GM12878 (cell line): ENCODE measurements at regions of chr4 and their contacts with region 1.

Region 1: DNA sequence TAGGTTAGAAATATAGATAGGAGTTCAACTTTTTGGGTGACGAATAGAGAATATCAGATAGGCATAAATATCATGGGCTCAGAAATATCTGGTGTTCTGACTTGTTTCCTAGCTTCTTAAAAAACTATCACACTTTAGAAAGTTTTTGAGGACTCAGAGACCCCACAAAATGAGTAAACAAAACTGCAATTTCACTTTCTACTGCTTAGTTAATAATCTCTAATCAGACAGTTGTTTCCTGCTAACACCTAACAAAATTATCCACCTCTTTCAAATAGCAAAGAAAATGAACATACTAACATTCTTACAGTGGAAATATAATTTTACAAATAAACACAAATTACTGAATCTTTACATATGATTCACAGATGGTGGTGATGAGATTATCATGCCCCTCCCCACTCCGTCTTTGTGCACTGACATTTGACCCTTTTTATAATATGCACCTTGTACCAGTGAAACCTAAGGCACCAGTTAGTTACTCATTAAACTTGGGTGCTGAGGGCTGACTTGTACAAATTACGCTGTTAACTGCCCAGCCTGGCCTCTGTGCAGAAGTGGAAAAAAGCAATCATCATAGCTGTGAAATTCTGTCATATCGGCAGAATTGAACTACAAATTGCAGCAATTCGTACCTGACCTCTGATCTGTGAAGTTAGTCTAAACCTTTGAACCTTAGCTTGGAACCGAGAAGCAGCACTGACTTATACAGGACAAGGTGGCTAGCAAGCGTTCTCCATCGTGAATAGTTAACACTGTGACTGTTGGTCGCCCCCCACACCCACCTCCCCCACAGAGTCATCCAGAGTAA is 138.7 kb downstream of the CHRNA9 start:
- DNase-seq: peak; percentile 46
- ATAC-seq: peak; percentile 94
- H3K4me3 ChIP-seq: no peak overlapping the region
- H3K27ac ChIP-seq: no peak overlapping the region
- H3K4me1 ChIP-seq: peaks cover 12% of the 10 kb centered on the region
- H3K27me3 ChIP-seq: no peaks in the 10 kb centered on the region
- CTCF ChIP-seq: no peak
- EP300 ChIP-seq: 0 out of 4 replicates have a peak, but pooled peaks of 1 of the 2 experiments have one; percentile 52
- POLR2A ChIP-seq: no peak
- RAD21 ChIP-seq: no peak

Region 2: DNA sequence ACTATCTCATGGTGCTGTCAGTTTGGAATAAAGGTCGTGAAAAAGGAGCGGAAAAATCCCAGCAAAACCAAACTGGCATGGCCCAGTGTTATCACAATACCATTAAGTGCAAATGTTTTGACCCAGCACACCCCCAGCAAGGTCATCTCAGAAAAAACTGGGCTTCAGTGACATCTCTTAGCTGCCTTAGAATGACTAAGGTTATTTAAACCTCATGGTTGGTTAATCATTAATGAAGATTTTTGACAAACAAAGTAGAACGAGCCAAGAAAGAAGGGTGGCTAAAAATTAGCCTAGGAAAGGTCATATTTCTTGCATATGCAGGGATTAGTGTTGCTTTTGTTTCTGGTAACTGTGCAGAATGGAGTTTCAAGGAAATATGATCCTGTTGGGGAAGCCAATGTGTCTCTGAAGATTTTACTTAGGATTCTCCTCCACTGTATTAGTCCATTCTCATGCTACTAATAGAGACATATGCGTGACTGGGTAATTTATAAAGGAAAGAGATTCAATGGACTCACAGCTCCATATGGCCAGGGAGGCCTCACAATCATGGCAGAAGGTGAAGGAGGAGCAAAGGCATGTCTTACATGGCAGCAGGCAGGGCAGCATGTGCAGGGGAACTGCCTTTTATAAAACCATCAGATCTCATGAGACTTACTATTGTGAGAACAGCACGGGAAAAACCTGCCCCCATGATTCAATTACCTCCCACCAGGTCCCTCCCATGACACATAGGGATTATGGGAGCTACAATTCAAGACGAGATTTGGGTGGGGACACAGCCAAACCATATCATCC is 55.2 kb before region 1 on chr4:
- CTCF ChIA-PET with region 1: no interaction called
- POLR2A ChIA-PET with region 1: interaction called, 12 read pairs
- RAD21 ChIA-PET with region 1: no interaction called
- SMC1A ChIA-PET with region 1: no interaction called
- in situ Hi-C with region 1: no loop called
- intact Hi-C with region 1: no loop called
- DNase-seq: no peak
- ATAC-seq: peak; percentile 55
- H3K4me3 ChIP-seq: no peak overlapping the region
- H3K27ac ChIP-seq: no peak overlapping the region
- H3K4me1 ChIP-seq: peaks cover 11% of the 10 kb centered on the region; the same call in 1 of the 2 replicates
- H3K27me3 ChIP-seq: no peaks in the 10 kb centered on the region
- CTCF ChIP-seq: no peak
- EP300 ChIP-seq: no peak
- POLR2A ChIP-seq: no peak
- RAD21 ChIP-seq: no peak

Region 3: DNA sequence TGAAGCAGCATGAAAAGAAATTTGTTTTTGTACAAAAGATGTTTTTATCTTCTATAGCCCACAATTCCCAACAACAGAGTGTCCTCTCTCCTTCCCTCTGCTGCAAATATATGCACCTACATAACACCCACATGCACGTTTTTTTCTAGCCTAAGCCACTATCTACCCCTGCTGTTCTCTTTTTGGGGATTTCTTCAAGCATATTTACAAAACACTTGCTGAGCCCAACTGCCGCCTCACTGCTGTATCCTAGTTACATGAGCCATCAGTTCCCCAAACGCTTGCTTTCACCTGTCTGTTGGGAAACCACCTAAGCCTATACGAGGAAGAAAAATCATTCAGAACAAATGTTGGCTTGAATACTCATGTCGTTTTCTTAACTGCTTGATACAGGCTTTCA is 11.5 kb before region 1 on chr4:
- CTCF ChIA-PET with region 1: interaction called, 16 read pairs
- POLR2A ChIA-PET with region 1: interaction called, 29 read pairs
- RAD21 ChIA-PET with region 1: interaction called, 13 read pairs
- SMC1A ChIA-PET with region 1: interaction called, 102 read pairs
- in situ Hi-C with region 1: no loop called
- intact Hi-C with region 1: no loop called
- DNase-seq: peak; percentile 57
- ATAC-seq: peak; percentile 93
- H3K4me3 ChIP-seq: no peak overlapping the region
- H3K27ac ChIP-seq: peak overlapping the region; percentile 61
- H3K4me1 ChIP-seq: peaks cover 27% of the 10 kb centered on the region
- H3K27me3 ChIP-seq: no peaks in the 10 kb centered on the region
- CTCF ChIP-seq: peak in 2 of 3 experiments; percentile 5 to 40; a peak in 3 of 6 replicates
- EP300 ChIP-seq: peak; percentile 48 to 87; a peak in 3 of 4 replicates
- POLR2A ChIP-seq: no peak
- RAD21 ChIP-seq: peak; percentile 51; the same call in 1 of the 2 replicates

Region 4: GRCh38 chr4:40492691-40493090 is 18.9 kb after region 1 on chr4:
- CTCF ChIA-PET with region 1: interaction called, 4 read pairs
- POLR2A ChIA-PET with region 1: interaction called, 4 read pairs
- RAD21 ChIA-PET with region 1: interaction called, 9 read pairs
- SMC1A ChIA-PET with region 1: interaction called, 19 read pairs
- in situ Hi-C with region 1: no loop called
- intact Hi-C with region 1: no loop called
- DNase-seq: no peak
- ATAC-seq: no peak
- H3K4me3 ChIP-seq: no peak overlapping the region
- H3K27ac ChIP-seq: no peak overlapping the region
- H3K4me1 ChIP-seq: no peaks in the 10 kb centered on the region; the same call in 1 of the 2 replicates
- H3K27me3 ChIP-seq: no peaks in the 10 kb centered on the region
- CTCF ChIP-seq: no peak
- EP300 ChIP-seq: no peak
- POLR2A ChIP-seq: no peak
- RAD21 ChIP-seq: no peak

Region 5: DNA sequence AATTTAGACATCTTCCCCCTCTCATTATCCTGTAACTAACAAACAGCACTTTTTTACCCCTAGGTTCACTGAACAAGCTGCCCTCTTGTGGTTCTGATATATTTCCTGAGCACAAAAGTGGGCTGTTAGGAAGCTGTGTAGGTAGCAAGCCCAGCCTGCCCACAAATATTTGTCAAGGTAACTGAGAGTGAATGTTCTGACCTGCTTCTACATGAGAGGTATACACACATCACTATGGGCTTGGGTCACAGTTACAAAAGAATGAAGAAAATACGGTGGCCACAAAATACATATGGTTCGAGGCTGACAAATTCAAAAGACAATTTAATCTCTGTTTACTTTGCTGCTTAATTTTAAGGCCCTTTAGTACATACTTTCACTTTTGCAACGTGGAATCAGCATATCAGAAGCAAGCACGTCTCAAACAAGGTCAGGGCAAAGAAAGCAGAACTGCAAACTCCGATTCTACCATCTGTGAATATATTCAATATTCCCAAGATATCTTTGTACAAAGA is 77.2 kb after region 1 on chr4:
- CTCF ChIA-PET with region 1: interaction called, 3 read pairs
- POLR2A ChIA-PET with region 1: interaction called, 4 read pairs
- RAD21 ChIA-PET with region 1: interaction called, 8 read pairs
- SMC1A ChIA-PET with region 1: interaction called, 12 read pairs
- in situ Hi-C with region 1: no loop called
- intact Hi-C with region 1: no loop called
- DNase-seq: peak; percentile 76
- ATAC-seq: peak; percentile 89
- H3K4me3 ChIP-seq: peak overlapping the region; percentile 20
- H3K27ac ChIP-seq: peak overlapping the region; percentile 47
- H3K4me1 ChIP-seq: peaks cover 18% of the 10 kb centered on the region; the same call in 1 of the 2 replicates
- H3K27me3 ChIP-seq: no peaks in the 10 kb centered on the region
- CTCF ChIP-seq: peak; percentile 42 to 53 (median 47); a peak in 5 of 6 replicates
- EP300 ChIP-seq: peak in 1 of 2 experiments; percentile 6; a peak in 1 of 4 replicates
- POLR2A ChIP-seq: no peak
- RAD21 ChIP-seq: peak; percentile 71

Region 6: GRCh38 chr4:40587823-40588222 is 114.0 kb after region 1 on chr4:
- CTCF ChIA-PET with region 1: no interaction called
- POLR2A ChIA-PET with region 1: no interaction called
- RAD21 ChIA-PET with region 1: no interaction called
- SMC1A ChIA-PET with region 1: no interaction called
- in situ Hi-C with region 1: no loop called
- intact Hi-C with region 1: no loop called
- DNase-seq: no peak
- ATAC-seq: no peak; the same call in 2 of the 3 replicates
- H3K4me3 ChIP-seq: no peak overlapping the region
- H3K27ac ChIP-seq: no peak overlapping the region
- H3K4me1 ChIP-seq: no peaks in the 10 kb centered on the region; the same call in 1 of the 2 replicates
- H3K27me3 ChIP-seq: no peaks in the 10 kb centered on the region
- CTCF ChIP-seq: no peak
- EP300 ChIP-seq: no peak
- POLR2A ChIP-seq: no peak
- RAD21 ChIP-seq: no peak